Panc1 (cell line): ENCODE measurements at regions of chr17 and their contacts with region 1.

Region 1: DNA sequence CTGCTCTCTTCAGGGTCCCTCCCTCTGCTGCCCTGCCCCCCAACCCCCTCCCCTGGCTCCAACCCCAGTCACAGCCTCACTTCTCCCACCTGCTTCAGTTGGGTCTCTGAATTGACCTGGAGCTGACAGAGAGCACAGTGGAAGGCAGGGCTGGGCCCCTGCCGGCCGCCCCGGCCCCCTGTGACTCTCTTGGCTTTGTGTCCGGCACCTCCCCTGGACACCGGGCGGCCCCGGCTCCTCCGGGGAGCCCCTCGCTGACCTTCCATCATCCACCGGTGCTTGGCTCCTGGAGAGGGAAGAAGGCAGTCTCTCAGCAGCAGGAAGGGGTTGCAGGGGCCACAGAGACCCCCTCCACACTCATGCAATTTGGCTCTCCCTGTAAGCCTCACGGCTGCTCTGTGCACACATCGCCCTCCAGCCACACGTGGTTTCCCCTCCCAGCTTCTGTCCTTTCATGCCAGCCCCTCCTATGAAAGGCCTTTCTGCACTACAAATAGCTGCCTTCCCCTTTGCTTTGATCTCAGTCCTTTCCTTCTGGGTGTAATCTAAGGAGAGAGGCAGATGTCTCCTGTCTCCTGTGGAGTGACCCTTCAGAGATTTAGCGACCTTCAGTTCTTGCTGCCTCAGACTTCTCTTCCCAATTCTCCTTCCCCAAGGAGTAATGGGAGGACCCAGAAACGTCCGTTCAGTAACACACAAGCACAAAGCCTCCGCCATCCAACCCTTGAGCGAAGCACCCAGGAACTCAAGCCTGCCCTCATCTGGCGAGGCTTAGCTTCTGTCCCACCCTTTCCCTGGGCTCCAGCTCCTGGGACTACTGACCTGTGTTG is 8.3 kb downstream of the NKIRAS2 start:
- DNase-seq: no peak
- ATAC-seq: 0 out of 2 replicates have a peak, but pooled peaks have one; percentile 38
- H3K4me3 ChIP-seq: no peak overlapping the region
- H3K27ac ChIP-seq: no peak overlapping the region
- H3K4me1 ChIP-seq: peaks cover 5% of the 10 kb centered on the region; the same call in 1 of the 2 replicates
- H3K27me3 ChIP-seq: no peaks in the 10 kb centered on the region
- CTCF ChIP-seq: peak; percentile 52; the same call in 1 of the 2 replicates

Region 2: DNA sequence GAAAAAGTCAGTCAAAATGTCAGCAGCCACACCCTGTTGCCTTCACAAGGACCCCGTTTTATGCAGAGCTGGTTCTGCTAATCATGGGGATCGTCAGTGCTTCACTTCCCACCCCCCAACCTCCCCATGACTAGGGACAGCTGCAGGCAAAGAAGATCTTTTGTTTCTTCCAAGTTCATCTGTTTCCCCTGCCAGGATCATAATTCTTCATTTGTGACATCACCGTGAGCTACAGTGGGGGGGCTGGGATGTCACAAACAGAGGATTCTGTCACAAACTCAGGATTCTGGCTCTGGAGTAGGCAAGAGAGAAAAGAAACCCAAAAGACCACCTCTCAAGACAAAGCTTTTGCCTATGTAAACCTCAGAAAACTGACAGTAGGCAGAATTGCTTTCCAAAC is 35.6 kb before region 1 on chr17:
- CTCF ChIA-PET with region 1: no interaction called
- POLR2A ChIA-PET with region 1: no interaction called
- in situ Hi-C with region 1: no loop called
- intact Hi-C with region 1: no loop called
- DNase-seq: no peak
- ATAC-seq: no peak
- H3K4me3 ChIP-seq: no peak overlapping the region
- H3K27ac ChIP-seq: no peak overlapping the region
- H3K4me1 ChIP-seq: no peaks in the 10 kb centered on the region
- H3K27me3 ChIP-seq: no peaks in the 10 kb centered on the region
- CTCF ChIP-seq: no peak

Region 3: GRCh38 chr17:42016925-42017796 is 11.0 kb before region 1 on chr17 and contains the start of gene DNAJC7:
- CTCF ChIA-PET with region 1: interaction called, 4 read pairs
- POLR2A ChIA-PET with region 1: interaction called, 11 read pairs
- in situ Hi-C with region 1: no loop called
- intact Hi-C with region 1: no loop called
- DNase-seq: peak; percentile 35
- ATAC-seq: peak; percentile 95
- H3K4me3 ChIP-seq: peak within 1 kb of the TSS; percentile 90 to 93
- H3K27ac ChIP-seq: peak within 1 kb of the TSS; percentile 94
- H3K4me1 ChIP-seq: peaks cover 7% of the 10 kb centered on the region; the same call in 1 of the 2 replicates
- H3K27me3 ChIP-seq: no peaks in the 10 kb centered on the region
- CTCF ChIP-seq: no peak
- total RNA-seq, gene DNAJC7: 72.0 TPM

Region 4: DNA sequence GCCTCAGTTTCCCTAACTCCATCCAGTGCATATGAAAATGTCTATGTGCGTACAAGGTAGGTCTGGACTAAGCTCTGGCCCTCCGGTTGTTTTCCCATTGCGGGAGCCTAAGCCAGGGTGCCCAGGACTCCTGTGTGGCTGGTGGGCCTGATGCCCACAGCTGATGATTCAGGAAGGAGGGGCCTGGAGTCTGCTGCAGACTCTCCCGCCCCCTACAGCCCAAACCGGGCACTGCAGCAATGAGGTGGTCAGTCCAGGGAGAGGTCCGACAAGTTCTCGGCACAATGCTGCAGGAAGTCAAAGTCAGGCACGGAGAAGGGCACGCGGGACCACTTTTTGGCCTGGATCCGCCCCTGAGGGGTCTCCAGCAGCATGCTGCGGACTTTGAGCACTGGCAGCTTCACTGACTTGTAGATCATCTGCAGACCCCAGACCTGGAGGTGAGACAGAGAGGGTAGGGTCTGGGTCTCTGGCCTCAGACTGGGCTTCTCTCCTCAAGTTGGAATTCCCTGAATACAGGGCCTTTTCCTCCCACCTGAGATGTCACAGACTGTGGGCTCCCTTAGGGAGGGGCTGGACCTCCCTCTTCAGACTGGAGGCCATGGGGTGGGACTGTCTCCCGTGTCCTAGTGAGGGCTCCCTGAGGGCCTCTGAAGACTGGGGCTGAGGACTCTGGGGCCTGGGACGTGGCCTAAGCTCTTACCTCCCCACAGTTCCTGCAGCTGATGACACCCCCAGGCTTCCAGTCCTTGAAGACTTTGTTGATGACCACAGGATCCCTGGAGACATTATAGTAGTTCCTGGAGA is 73.5 kb after region 1 on chr17:
- CTCF ChIA-PET with region 1: no interaction called
- POLR2A ChIA-PET with region 1: no interaction called
- in situ Hi-C with region 1: no loop called
- intact Hi-C with region 1: loop called (anchors 5 kb)
- DNase-seq: no peak
- ATAC-seq: peak; percentile 78
- H3K4me3 ChIP-seq: no peak overlapping the region
- H3K27ac ChIP-seq: no peak overlapping the region
- H3K4me1 ChIP-seq: no peaks in the 10 kb centered on the region
- H3K27me3 ChIP-seq: no peaks in the 10 kb centered on the region
- CTCF ChIP-seq: peak; percentile 80

Region 5: DNA sequence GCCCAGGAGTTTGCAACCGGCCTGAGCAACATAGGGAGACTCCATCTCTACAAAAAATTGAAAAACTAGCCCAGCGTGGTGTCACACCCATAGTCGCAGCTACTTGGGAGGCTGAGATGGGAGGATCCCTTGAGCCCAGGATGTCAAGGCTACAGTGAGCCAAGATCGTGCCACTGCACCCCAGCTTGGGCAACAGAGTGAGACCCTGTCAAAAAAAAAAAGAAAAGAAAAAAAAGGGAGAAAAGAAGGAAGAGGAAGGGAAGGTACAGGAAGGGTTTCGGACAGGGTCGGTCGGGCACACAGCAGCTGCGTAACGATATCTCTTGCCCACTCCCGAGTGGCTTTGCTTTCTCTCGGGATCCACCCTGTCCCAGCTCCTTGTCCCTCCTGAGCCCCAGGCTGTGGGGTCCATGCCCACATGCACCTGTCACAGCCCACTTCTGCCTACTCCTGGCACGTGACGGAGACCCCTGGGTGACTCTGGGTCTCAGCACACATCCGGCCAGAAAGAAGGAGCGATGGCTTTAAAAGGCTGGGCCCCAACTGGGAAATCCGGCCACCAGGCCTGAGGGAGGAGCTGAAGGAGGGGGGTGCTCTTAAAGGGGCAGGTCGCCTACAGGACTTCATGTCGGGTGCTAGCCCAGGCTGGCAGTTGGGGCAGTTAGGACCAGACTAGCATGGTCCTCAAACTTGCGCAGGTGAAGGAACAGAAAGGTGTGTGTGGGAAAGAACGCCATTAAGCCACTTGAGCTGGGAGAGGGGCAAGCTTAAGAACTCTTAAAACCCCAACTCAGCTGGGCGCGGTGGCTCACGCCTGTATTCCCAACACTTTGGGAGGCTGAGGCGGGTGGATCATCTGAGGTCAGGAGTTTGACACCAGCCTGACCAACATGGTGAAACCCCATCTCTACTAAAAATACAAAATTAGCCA is 166.1 kb after region 1 on chr17 and contains the start of gene GHDC:
- CTCF ChIA-PET with region 1: no interaction called
- POLR2A ChIA-PET with region 1: interaction called, 13 read pairs
- in situ Hi-C with region 1: no loop called
- intact Hi-C with region 1: no loop called
- DNase-seq: no peak
- ATAC-seq: peak; percentile 92
- H3K4me3 ChIP-seq: peak within 1 kb of the TSS; percentile 61 to 82
- H3K27ac ChIP-seq: peak within 1 kb of the TSS; percentile 89
- H3K4me1 ChIP-seq: no peaks in the 10 kb centered on the region
- H3K27me3 ChIP-seq: no peaks in the 10 kb centered on the region
- CTCF ChIP-seq: no peak
- total RNA-seq, gene GHDC: 21.8 TPM